ENCODE measurements at regions of chr3 and their contacts with region 1.

Region 1: GRCh38 chr3:37855363-37855970 is 6.2 kb upstream of the CTDSPL start:
- DNase-seq: peak; percentile 87
- H3K4me3 ChIP-seq: no peak overlapping the region
- H3K27ac ChIP-seq: no peak overlapping the region
- H3K4me1 ChIP-seq: peaks cover 6% of the 10 kb centered on the region
- H3K27me3 ChIP-seq: no peaks in the 10 kb centered on the region
- CTCF ChIP-seq: peak; percentile 95

Region 2: DNA sequence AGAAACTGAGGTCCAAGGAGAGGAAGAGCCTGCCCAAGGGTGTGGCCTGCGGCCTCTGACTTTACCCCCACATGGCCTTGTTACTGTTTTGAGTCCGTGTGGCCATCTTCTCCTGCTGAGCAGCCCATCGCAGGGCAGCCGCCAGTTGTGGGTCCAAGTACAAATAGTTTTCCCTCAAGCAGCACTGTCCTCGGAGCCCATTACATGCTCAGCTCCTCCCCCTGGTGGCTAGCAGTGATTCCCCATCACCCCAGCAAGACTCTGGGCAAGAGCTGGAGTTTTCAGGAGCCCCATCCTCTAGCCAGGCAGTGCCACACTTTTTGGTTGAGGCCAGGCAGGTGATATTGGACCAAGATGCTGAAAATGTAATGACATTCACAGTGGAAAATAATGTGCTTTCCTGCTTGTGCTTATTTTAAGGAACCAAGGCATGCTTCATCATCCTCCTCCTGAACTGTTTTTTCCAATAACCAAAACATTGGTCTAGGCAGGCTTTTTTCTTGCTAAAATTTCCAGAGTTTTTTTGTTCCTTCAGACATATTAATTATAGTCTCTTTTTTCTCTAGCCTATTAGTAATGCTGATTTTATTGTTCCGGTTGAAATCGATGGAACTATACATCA is 111.9 kb after region 1 on chr3:
- intact Hi-C with region 1: loop called (anchors 2 kb)
- DNase-seq: peak; percentile 83
- H3K4me3 ChIP-seq: no peak overlapping the region
- H3K27ac ChIP-seq: no peak overlapping the region
- H3K4me1 ChIP-seq: peaks cover 3% of the 10 kb centered on the region
- H3K27me3 ChIP-seq: no peaks in the 10 kb centered on the region
- CTCF ChIP-seq: peak; percentile 83

Region 3: DNA sequence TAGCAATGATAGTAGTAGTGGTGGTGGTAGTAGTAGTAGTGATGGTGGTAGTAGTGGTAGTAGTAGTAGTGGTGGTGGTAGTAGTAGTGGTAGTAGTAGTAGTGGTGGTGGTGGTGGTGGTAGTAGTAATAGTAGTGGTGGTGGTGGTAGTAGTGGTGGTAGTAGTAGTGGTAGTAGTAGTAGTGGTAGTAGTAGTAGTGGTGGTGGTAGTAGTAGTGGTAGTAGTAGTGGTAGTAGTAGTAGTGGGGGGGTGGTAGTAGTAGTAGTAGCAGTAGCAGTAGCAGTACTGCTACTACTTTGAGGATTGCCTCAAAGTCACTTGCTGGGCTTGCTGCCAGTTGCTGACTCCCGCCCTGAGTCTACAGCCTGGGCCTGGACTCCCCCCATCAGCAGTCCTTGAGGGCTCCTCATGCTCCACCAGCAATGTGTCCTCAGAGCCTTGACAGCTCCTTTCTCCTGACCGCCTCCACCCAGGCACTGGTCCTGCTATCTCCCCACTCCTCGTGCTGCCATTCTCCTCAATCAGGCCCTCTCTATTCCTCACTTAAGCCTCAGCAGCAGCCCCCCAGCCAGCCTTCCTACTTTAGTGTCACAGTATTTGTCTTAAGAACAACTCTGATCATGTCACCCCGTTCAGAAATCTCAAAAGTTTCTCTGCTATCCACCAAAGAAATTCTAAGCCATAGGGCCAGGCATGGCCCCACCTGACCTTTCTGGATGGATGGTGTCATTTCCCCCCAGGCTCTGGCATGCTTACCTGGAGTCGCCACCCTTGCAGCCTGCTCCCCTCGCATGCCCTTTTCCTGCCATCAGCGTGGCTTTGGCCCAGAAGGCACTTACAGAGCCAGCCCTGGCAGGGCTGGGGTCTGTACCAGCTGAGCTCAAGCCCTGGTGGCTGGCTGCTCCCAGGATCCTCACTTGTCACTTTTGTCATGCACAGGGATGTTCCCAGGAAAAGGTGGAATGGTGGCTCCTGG is 229.2 kb after region 1 on chr3:
- intact Hi-C with region 1: no loop called
- DNase-seq: no peak
- H3K4me3 ChIP-seq: no peak overlapping the region
- H3K27ac ChIP-seq: no peak overlapping the region
- H3K4me1 ChIP-seq: no peaks in the 10 kb centered on the region
- H3K27me3 ChIP-seq: no peaks in the 10 kb centered on the region
- CTCF ChIP-seq: no peak

Region 4: GRCh38 chr3:38346587-38347410 is 491.3 kb after region 1 on chr3 and contains the start of gene XYLB:
- intact Hi-C with region 1: no loop called
- DNase-seq: peak; percentile 92
- H3K4me3 ChIP-seq: peak within 1 kb of the TSS; percentile 96
- H3K27ac ChIP-seq: peak within 1 kb of the TSS; percentile 69
- H3K4me1 ChIP-seq: no peaks in the 10 kb centered on the region
- H3K27me3 ChIP-seq: no peaks in the 10 kb centered on the region
- CTCF ChIP-seq: peak; percentile 78
- total RNA-seq, gene XYLB: 13.4 to 17.4 TPM

Measured in colonic mucosa (tissue), 4 donors.